ENCODE measurements at regions of chr12 and their contacts with region 1.

Region 1: GRCh38 chr12:122399592-122400373 is 22.7 kb downstream of the CLIP1 start:
- DNase-seq: no peak

Region 2: GRCh38 chr12:122411537-122411936 is 11.8 kb after region 1 on chr12:
- intact Hi-C with region 1: loop called in 1 of 2 experiments (anchors 1 kb)
- DNase-seq: no peak

Region 3: DNA sequence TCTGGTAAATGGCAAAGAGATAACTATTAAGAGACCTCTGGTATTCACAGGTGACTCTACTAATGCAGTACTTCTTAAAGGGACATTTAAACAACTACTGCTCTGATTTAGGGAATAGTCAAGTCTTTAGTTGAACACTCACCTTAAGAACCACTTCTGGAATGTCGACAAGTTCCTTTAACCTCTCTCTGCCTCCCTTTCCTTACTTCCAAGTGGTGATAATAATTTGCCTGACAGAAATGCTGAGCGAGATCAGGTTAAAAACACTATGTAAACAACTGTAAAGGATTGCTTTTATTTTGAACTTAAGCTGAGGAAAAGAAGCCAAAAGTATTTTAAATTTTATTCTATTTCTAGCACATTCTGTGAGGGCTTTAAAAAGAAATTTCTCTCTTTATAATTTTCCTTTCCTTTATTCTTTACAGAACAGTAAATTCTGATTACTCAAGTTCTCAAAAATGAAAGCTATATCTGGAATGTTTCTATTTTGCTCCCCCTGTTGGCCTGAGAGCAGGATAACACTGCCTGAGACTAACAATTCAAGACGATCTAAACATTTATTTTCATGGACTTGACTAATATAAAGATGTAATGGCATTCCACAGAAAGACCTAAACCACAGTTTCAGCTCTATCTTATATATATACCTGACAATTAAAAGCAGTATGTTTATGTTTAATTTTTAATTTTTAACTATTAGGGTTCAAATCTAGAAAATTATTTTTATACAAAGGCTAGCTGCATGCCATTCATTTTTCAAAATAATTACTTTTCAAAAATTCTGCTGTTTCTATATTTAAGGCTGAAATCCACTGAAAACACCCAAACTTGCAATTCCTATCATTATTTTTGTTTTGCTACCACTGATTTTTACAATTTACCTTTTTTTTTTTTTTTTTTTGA is 71.8 kb after region 1 on chr12:
- intact Hi-C with region 1: loop called in 1 of 2 experiments (anchors 5 kb)
- DNase-seq: no peak

Measured in posterior vena cava (tissue), 2 donors.